Transverse colon (tissue), 4 donors: ENCODE measurements at regions of chr4 and their contacts with region 1.

Region 1: DNA sequence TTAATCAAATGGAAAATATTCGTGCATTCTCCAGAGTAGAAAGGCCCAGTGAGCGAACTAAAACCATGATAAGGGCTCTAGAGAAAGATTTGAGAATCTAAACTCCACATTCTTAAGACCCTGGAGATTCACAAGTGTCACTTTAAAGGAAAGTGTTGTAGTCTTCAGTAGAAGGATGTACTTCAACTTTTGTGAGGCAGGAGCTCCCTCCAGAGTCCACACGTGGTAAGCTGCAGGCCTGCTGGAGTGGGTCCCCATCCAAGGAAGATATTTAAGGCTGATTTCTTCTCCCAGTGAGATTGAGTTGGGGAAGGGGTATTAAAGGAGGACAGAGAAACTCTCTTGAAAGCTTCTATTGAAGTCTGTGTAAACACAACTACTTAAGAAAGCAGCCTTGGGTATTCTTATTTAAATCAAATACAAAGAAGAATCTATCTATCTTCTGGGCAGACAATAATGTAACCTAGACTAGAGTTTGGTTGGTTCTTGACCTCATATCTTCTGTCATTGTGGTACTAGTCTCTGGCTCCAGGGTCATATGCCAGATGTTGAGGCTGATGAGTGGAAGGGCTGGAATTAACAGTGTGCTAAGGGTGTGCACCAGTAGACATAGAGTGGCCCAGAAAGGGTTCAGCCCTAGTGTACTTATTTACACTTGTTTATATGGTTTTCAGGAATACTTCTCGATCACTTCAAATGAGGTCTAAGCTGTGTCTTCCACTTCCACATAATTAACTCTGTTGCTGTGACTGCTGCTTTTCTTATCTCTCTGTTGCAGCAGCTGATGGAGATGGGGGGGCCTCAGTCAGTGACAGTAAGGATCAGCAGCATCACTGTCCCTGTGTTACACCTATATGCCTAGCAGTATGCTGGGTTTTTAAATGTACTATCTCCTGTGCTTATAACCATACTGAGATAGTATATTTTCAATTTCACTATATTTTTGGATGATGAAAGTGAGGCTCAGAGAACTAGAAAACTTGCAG is 76.1 kb downstream of the HMGB2 start:
- DNase-seq: peak; percentile 62
- H3K4me3 ChIP-seq: no peak overlapping the region
- H3K27ac ChIP-seq: no peak overlapping the region
- H3K4me1 ChIP-seq: peaks cover 0 to 4% (median 0%) of the 10 kb centered on the region in 4 donors
- H3K27me3 ChIP-seq: no peaks in the 10 kb centered on the region
- CTCF ChIP-seq: peak; percentile 60 to 76 (median 67)
- EP300 ChIP-seq: no peak
- POLR2A ChIP-seq: no peak

Region 2: DNA sequence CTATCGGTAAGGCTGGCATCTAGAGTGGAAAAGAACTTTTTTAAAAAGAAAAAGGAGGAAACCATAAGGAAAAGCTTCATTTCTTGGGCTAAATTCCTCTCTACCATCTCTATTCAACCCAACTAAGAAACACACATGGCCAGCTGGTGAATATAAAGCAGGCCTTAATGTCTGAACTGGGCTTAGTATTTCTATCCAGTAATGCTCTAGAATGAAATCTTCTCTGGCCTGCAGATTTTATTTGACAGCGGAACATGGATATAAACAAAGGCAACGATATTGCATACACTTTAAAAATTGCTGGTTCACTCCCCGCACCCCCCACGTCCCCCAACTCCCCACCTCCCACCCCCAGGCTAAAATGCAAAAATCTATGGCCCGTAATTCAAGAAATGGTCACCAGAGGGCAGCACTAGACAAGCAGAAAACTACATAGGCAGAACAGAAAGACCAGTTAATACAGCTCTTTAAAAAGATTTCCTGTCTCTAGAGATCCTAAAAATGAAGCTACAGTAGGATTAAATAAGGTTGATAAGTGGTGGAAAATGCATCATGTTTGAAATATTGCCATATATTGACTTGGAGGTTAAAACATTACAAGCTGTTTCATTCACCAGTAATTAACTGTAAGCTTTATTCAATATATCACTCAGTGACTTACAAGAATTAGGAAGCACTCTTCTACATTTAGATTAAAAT is 244.6 kb before region 1 on chr4:
- in situ Hi-C with region 1: loop called in 2 of 4 experiments (anchors 5 to 25 kb)
- intact Hi-C with region 1: no loop called
- DNase-seq: peak; percentile 36
- H3K4me3 ChIP-seq: no peak overlapping the region
- H3K27ac ChIP-seq: no peak overlapping the region
- H3K4me1 ChIP-seq: peaks cover 0 to 6% (median 0%) of the 10 kb centered on the region in 4 donors
- H3K27me3 ChIP-seq: no peaks in the 10 kb centered on the region
- CTCF ChIP-seq: peak; percentile 61 to 84 (median 80)
- EP300 ChIP-seq: no peak
- POLR2A ChIP-seq: no peak

Region 3: DNA sequence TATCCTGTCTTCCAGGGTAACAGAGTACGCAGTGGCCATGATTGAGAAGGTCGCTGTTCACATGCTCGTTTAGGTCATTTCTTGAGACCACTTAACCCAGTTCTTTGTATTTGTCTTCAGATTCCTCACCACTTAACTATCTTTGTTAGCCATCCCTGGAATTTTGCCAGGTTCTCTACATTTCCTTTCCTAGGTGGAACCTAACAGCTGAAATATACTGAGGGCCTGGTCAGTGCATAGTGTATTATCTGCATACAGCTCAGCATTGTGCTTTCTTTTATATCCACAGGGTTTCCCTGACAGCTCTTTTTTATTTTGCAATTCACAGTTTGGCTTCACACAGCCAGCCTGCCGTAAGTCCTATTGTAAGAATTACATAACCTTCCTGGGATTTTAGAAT is 238.3 kb before region 1 on chr4:
- in situ Hi-C with region 1: loop called in 3 of 4 experiments (anchors 5 to 25 kb)
- intact Hi-C with region 1: loop called (anchors 5 kb)
- DNase-seq: no peak
- H3K4me3 ChIP-seq: no peak overlapping the region
- H3K27ac ChIP-seq: no peak overlapping the region
- H3K4me1 ChIP-seq: no peaks in the 10 kb centered on the region
- H3K27me3 ChIP-seq: no peaks in the 10 kb centered on the region
- CTCF ChIP-seq: no peak
- EP300 ChIP-seq: no peak
- POLR2A ChIP-seq: no peak

Region 4: DNA sequence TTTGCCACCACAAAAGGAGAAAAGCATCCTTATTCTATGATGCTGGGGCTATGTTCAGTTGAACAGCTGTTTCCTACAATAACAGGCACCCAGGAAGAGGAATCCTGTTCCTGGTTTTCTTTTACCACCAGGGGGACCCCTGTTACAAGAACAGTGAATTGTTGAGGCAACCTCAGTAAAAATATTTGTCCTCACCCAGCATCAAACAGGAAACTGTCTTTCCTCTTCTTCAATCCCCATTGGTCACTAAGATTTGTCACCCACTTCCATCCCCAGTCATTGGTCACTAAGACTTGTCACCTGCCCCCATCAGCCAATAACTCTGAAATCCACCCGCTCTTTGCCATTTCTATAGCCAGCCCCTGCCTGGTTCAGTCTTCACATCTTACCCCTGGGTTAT is 232.9 kb before region 1 on chr4:
- in situ Hi-C with region 1: loop called in 3 of 4 experiments (anchors 5 to 25 kb)
- intact Hi-C with region 1: loop called (anchors 5 kb)
- DNase-seq: peak; percentile 26
- H3K4me3 ChIP-seq: no peak overlapping the region
- H3K27ac ChIP-seq: no peak overlapping the region
- H3K4me1 ChIP-seq: no peaks in the 10 kb centered on the region
- H3K27me3 ChIP-seq: no peaks in the 10 kb centered on the region
- CTCF ChIP-seq: peak; percentile 63 to 84 (median 76)
- EP300 ChIP-seq: no peak
- POLR2A ChIP-seq: no peak

Region 5: DNA sequence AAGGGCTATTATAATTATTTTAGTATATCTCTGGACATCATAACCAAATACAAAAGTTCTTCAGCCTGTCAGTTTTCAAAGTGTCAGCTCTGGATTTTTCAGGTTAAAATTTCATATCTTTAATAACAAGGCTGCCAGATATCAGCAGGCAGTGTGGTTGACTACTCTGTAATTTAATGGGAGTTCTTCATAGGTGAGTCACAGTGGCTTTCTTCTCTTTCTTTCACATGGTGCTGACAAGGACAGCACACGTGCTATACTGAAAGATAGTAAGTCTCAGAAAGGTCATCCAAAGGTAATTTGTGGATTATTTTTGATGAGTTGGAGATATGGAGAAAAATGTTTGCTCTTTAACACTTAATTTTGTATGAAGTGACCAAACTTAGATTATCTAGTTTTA is 46.2 kb before region 1 on chr4:
- in situ Hi-C with region 1: no loop called
- intact Hi-C with region 1: no loop called
- DNase-seq: no peak
- H3K4me3 ChIP-seq: no peak overlapping the region
- H3K27ac ChIP-seq: no peak overlapping the region
- H3K4me1 ChIP-seq: peaks cover 0 to 13% (median 4%) of the 10 kb centered on the region in 4 donors
- H3K27me3 ChIP-seq: no peaks in the 10 kb centered on the region
- CTCF ChIP-seq: no peak
- EP300 ChIP-seq: no peak
- POLR2A ChIP-seq: no peak

Region 6: DNA sequence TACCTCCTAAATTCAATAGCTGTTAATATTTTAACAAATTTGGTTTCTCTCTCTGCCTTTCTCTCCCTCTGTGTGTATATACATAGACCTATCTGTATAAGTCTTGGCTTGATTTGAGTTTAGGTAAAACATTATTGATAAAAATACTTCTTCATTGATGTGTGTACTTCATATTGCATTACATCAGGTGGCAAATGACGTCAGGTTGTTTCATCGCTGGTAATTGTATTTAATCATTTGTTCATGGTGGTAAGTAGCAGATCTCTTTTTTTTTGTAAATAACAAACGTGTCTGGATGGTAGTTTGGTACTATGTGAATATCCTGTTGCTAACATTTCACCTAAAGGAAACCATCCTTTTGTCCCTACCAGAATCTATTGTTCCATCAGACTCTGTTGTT is 34.3 kb before region 1 on chr4:
- in situ Hi-C with region 1: no loop called
- intact Hi-C with region 1: no loop called
- DNase-seq: no peak
- H3K4me3 ChIP-seq: no peak overlapping the region
- H3K27ac ChIP-seq: no peak overlapping the region
- H3K4me1 ChIP-seq: peaks cover 0 to 7% (median 2%) of the 10 kb centered on the region in 4 donors
- H3K27me3 ChIP-seq: no peaks in the 10 kb centered on the region
- CTCF ChIP-seq: no peak
- EP300 ChIP-seq: no peak
- POLR2A ChIP-seq: no peak